B cell (primary cell): ENCODE measurements at regions of chr11 and their contacts with region 1.

Region 1: DNA sequence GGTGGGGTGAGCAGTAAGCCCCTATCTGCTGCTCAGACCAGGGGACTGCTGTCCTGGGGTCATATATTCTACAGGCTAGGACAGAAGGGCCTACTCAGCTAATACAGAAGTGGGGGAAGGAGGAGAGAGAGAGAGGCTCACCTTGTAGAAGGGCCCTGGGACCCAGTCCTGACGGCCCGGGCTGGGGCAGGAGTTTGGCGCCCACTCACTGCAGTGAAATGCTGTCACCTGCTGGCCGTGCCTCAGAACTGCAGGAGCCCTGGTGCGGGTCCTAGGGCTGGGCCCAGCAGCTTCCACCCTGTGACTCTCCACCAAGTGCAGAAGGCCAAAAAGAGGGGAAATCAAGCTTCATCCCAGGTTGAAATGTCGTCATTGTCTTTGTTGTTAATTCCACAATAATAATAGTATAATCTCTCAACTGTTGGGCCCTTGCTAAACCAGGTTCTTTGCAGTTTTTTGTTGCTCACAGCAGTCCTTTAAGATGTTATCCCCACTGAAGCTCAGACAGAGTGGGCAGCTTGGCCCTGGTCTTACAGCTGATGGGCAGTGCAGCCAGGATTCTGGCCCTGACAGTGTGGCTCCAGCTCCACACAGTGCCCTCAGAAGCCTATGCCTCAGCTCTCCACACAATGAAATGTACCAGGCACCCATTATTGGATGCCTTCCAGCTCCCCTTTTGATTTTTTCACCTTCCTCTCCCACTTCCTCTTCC is 29.6 kb downstream of the TRIM29 start:
- DNase-seq: peak; percentile 62
- ATAC-seq: peak; percentile 60
- H3K4me3 ChIP-seq: no peak overlapping the region
- H3K4me3 Mint-ChIP-seq: no peak overlapping the region
- H3K27ac ChIP-seq: no peak overlapping the region
- H3K27ac Mint-ChIP-seq: no peak overlapping the region
- H3K4me1 ChIP-seq: no peaks in the 10 kb centered on the region
- H3K4me1 Mint-ChIP-seq: no peaks in the 10 kb centered on the region
- H3K27me3 ChIP-seq: peaks cover 0 to 14% (median 0%) of the 10 kb centered on the region in 4 experiments
- H3K27me3 Mint-ChIP-seq: peaks cover 38% of the 10 kb centered on the region
- CTCF ChIP-seq: peak; percentile 93

Region 2: DNA sequence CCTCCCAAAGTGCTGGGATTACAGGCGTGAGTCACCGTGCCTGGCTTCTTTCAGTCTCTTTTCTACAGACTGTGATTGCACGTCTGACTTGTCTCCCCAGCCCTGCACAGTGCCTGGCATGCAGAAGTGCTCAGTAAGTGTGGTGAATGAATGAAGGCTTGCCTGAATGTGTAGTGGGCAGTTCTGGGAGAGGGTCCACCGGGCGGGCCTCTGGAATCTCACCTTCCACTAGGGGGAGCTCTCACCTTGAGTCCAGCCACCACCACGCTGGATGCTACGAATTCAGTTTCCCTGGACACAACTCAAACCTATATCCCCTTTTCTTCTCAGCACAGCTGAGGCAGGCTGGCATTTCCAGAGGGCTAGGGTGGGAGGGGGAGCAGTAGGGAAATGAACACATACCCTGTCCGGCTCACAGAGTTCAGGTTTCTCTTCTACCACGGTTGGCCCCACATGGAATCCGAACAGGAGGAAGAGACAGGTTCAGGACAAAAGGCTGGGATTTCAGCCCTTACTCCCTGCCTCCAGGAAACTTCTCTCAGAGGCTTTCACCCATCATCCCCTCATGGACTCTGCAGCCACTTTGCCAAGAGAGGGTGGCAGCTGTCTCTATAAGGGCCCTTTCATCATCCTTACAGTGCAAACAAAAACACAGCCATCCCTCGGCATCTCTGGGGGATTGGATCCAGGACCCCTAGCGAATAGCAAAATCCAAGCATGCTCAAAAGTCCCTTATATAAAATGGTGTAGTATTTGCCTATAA is 466.1 kb before region 1 on chr11:
- CTCF ChIA-PET with region 1: interaction called, 41 read pairs
- POLR2A ChIA-PET with region 1: no interaction called
- intact Hi-C with region 1: no loop called
- DNase-seq: peak; percentile 45
- ATAC-seq: no peak
- H3K4me3 ChIP-seq: no peak overlapping the region
- H3K4me3 Mint-ChIP-seq: no peak overlapping the region
- H3K27ac ChIP-seq: no peak overlapping the region
- H3K27ac Mint-ChIP-seq: no peak overlapping the region
- H3K4me1 ChIP-seq: no peaks in the 10 kb centered on the region
- H3K4me1 Mint-ChIP-seq: no peaks in the 10 kb centered on the region
- H3K27me3 ChIP-seq: no peaks in the 10 kb centered on the region
- H3K27me3 Mint-ChIP-seq: peaks cover 7% of the 10 kb centered on the region
- CTCF ChIP-seq: peak; percentile 60

Region 3: DNA sequence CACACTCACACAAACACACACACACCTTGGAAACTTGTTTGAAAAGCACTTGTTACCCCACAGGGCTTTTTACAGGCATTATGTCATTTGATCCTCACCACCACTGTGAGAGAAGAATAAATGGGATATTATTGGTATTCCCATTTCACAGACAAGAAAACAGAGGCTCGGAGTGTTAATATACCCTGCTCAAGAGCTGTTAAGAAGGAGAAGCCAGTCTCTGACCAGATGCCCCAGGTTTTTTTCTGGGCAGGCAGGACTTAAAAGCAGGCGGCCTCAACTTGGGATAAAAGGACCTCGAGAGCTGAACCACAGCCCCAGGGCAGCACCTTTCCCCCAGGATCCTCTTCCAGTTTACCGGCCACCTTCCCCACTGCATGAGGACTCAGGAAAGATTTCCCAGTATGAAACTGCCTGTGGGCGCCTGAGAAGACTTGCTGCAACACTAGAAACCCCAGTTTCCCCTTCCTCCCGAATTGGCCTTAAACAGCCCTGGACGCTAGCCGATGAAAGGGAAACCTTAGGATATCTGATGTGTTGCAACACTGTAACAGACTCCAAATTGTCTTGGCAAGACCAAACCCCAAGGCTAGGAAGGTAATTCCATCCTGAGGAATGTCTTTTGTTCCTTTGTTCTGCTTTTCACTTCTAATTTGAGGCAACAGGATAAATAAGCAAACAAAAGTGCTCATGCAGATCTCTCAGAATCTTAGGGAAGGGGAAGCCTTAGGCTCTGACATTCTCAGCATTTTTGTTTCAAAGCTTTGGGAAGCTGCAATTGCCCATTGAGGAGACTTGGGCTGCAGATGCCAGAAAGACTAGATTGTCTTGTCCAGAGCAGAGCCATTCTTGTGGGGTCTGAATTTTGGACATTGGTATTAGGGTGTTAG is 143.9 kb before region 1 on chr11:
- CTCF ChIA-PET with region 1: no interaction called
- POLR2A ChIA-PET with region 1: no interaction called
- intact Hi-C with region 1: no loop called
- DNase-seq: no peak
- ATAC-seq: no peak
- H3K4me3 ChIP-seq: no peak overlapping the region
- H3K4me3 Mint-ChIP-seq: no peak overlapping the region
- H3K27ac ChIP-seq: no peak overlapping the region
- H3K27ac Mint-ChIP-seq: no peak overlapping the region
- H3K4me1 ChIP-seq: no peaks in the 10 kb centered on the region
- H3K4me1 Mint-ChIP-seq: no peaks in the 10 kb centered on the region
- H3K27me3 ChIP-seq: peaks cover 0 to 4% (median 0%) of the 10 kb centered on the region in 4 experiments
- H3K27me3 Mint-ChIP-seq: peaks cover 9% of the 10 kb centered on the region
- CTCF ChIP-seq: no peak

Region 4: GRCh38 chr11:120096369-120097191 is 11.7 kb before region 1 on chr11:
- CTCF ChIA-PET with region 1: no interaction called
- POLR2A ChIA-PET with region 1: no interaction called
- intact Hi-C with region 1: no loop called
- DNase-seq: no peak
- ATAC-seq: no peak
- H3K4me3 ChIP-seq: no peak overlapping the region
- H3K4me3 Mint-ChIP-seq: no peak overlapping the region
- H3K27ac ChIP-seq: no peak overlapping the region
- H3K27ac Mint-ChIP-seq: no peak overlapping the region
- H3K4me1 ChIP-seq: no peaks in the 10 kb centered on the region
- H3K4me1 Mint-ChIP-seq: no peaks in the 10 kb centered on the region
- H3K27me3 ChIP-seq: no peaks in the 10 kb centered on the region
- H3K27me3 Mint-ChIP-seq: peaks cover 25% of the 10 kb centered on the region
- CTCF ChIP-seq: no peak